Body of pancreas (tissue), 4 donors: ENCODE measurements at regions of chrX and their contacts with region 1.

Region 1: DNA sequence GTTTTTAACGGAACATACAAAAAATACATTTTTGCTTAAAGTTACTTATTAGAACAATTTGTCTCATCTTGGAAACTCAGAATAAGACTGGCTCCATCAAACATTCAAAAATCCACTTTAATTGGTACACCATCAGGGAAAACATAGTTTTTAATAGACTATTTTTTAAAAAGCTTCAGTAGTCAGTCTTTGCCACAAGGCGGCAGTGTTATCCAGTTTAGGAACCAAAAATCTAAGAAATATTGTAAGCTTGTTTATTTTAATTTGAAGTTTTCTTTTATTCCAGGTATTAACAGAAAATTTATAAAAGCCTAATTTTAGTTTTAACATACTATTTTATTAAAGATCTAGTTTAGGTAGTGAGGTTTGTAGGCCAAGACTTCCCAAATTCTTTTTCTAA is 107.7 kb downstream of the APOOL start:
- DNase-seq: peak in 1 of 4 donors; percentile 20
- ATAC-seq: no peak
- H3K4me3 ChIP-seq: no peak overlapping the region
- H3K27ac ChIP-seq: no peak overlapping the region
- H3K4me1 ChIP-seq: no peaks in the 10 kb centered on the region
- H3K27me3 ChIP-seq: no peaks in the 10 kb centered on the region
- CTCF ChIP-seq: peak; percentile 48 to 66 (median 55)
- POLR2A ChIP-seq: no peak

Region 2: DNA sequence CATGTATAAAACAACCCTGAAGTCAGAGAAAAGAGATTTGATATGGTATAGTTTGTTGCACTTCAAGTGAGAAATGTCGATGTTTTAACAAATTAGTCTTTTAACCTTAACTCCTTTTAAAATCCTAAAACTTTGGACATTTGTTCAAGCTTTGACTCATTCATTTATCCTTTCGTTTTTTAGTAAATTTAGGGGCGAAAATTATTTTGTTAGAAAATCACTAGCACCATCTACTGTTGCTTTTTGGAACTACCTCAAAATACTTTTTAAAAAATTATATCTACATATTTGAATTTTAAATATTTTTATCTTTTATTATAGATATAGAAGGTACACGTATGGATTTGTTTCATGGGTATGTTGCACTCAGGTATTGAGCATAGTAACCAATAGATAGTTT is 433.3 kb after region 1 on chrX:
- intact Hi-C with region 1: loop called (anchors 10 kb)
- DNase-seq: no peak
- ATAC-seq: no peak
- H3K4me3 ChIP-seq: no peak overlapping the region
- H3K27ac ChIP-seq: no peak overlapping the region
- H3K4me1 ChIP-seq: no peaks in the 10 kb centered on the region
- H3K27me3 ChIP-seq: no peaks in the 10 kb centered on the region
- CTCF ChIP-seq: peak; percentile 18 to 45 (median 30)
- POLR2A ChIP-seq: no peak